ENCODE measurements at regions of chr5 and their contacts with region 1.

Region 1: DNA sequence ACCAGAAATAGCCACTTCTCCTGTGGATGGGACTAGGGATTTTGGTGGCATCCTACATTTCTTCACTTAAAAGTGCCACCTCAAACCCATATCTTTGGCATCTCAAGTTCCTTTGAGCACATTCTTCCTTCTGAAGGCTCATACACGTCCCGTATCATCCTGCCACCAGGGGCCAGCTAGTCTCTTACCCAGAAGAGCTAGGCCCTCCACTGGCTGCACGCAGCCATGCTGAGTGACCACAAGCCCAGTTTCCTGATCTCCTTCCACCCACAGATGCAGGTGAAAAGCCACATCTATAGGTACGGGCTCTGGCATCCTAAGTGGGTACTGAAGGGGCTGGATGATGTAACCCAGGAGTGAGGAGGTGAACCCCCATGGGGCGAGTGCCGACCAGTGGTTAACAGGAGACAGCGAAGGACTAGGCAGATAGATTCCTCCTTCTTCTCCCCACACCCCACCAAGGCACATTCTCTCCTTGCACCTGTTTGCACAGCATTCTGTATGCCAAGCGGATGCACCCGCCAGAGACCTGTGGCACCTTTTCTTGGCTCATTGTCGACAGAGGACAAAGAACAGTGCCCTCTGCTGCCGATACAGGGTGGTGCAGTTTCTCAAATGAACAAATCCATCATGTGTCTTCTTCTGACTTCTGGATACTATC is 14.4 kb upstream of the SCGB3A1 start:
- DNase-seq: peak; percentile 77

Region 2: DNA sequence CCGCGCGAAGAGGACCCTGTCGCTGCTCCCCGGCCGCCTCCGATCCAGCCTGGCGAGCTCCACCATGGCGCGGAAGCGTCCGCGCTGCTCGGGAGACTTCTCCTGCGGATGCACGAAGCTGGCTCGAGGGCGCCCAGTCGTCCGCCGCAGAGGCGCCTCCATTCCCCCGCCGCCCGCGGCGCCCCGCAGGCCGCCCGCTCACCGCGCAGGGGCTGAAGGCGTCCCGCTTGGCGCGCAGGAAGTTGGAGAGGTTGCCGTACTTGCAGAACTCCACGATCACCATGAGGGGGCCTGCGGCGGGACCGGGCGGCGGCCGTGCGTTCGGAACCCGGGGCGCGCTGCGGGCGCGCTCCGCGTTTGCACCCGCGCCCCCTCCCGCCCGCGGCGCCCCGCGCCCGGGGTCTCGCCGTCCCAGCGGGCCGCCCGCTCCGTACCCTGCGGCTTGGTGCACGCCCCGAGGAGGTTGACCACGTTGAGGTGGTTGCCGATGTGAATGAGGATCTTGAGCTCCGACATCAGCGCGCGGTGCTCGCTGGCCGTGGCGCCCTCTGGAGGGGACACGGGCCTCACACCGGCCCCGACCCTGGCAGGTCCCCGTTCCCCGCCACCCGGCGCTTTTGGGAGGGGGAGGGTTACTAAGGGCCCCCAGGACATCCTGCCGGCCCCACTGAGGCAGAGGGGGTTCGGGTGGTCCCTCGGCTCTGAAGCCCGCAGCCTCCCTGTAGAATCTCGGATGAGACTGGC is 13.3 kb after region 1 on chr5:
- CTCF ChIA-PET with region 1: interaction called, 11 read pairs
- POLR2A ChIA-PET with region 1: interaction called, 10 read pairs
- DNase-seq: peak; percentile 93

Measured in HEK293T (cell line).